B cell (primary cell): ENCODE measurements at regions of chr10 and their contacts with region 1.

Region 1: GRCh38 chr10:61903221-61903927 is 1.9 kb downstream of the ARID5B start:
- DNase-seq: peak; percentile 91
- ATAC-seq: peak; percentile 55
- H3K4me3 ChIP-seq: peak overlapping the region; percentile 69 to 98 (median 80)
- H3K4me3 Mint-ChIP-seq: peak overlapping the region; percentile 98
- H3K27ac ChIP-seq: peak overlapping the region; percentile 95 to 97
- H3K27ac Mint-ChIP-seq: peak overlapping the region; percentile 99
- H3K4me1 ChIP-seq: peaks cover 40 to 47% of the 10 kb centered on the region in 2 donors
- H3K4me1 Mint-ChIP-seq: peaks cover 49% of the 10 kb centered on the region
- H3K27me3 ChIP-seq: no peaks in the 10 kb centered on the region
- H3K27me3 Mint-ChIP-seq: no peaks in the 10 kb centered on the region
- CTCF ChIP-seq: peak; percentile 38

Region 2: DNA sequence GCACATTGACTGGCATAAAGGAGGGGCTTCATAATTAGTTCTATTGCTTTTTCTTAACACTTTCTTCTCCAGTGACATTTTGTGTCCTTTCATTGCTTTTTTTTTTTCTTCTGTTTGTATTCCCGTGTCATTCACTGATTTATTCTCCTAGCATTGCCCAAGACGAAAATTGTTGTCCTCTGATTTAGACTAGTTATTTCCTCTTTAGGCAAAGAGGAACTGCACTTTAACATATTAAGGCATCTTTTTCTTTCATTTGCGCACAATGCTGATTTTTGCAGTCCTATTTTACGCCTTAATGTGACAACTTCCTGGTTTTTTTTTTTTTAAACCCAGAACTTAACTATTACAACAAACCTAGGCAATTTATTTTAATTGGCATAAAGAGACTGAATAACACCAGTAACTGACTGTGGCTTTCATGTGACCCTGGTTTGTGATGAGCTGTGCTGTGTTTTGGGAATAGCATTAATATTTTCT is 37.9 kb after region 1 on chr10:
- CTCF ChIA-PET with region 1: interaction called, 7 read pairs
- POLR2A ChIA-PET with region 1: interaction called, 4 read pairs
- intact Hi-C with region 1: loop called (anchors 1 kb)
- DNase-seq: peak; percentile 86
- ATAC-seq: peak; percentile 64
- H3K4me3 ChIP-seq: peak overlapping the region in 2 of 5 experiments; percentile 10 to 30
- H3K4me3 Mint-ChIP-seq: peak overlapping the region; percentile 63
- H3K27ac ChIP-seq: peak overlapping the region; percentile 86 to 91
- H3K27ac Mint-ChIP-seq: peak overlapping the region; percentile 83
- H3K4me1 ChIP-seq: peaks cover 80 to 84% of the 10 kb centered on the region in 2 donors
- H3K4me1 Mint-ChIP-seq: peaks cover 77% of the 10 kb centered on the region
- H3K27me3 ChIP-seq: no peaks in the 10 kb centered on the region
- H3K27me3 Mint-ChIP-seq: no peaks in the 10 kb centered on the region
- CTCF ChIP-seq: no peak

Region 3: DNA sequence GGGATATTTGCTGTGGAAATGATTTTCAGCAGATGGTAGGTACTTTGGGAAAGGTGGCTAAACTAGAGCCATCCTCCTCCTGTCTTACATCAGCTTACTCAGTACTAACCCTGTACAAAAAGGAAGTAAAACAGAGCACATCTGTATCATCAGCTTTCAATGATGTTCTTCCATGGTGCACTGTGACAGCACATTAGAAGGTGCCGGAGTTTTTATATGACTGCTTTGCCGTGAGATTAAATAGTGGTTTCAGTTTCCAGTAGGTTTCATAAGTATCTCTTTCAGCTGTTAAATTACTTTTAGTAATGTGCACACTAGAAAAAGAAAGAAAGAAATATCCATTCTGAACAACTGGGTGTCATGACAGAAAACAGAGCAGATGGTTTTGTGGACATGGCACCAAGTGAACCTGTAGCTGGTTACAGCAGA is 84.6 kb after region 1 on chr10:
- CTCF ChIA-PET with region 1: interaction called, 12 read pairs
- POLR2A ChIA-PET with region 1: interaction called, 19 read pairs
- intact Hi-C with region 1: loop called (anchors 2 kb)
- DNase-seq: peak; percentile 88
- ATAC-seq: peak; percentile 82
- H3K4me3 ChIP-seq: peak overlapping the region in 1 of 5 experiments; percentile 29
- H3K4me3 Mint-ChIP-seq: peak overlapping the region; percentile 88
- H3K27ac ChIP-seq: peak overlapping the region; percentile 84 to 88
- H3K27ac Mint-ChIP-seq: peak overlapping the region; percentile 99
- H3K4me1 ChIP-seq: peaks cover 47 to 61% of the 10 kb centered on the region in 2 donors
- H3K4me1 Mint-ChIP-seq: peaks cover 82% of the 10 kb centered on the region
- H3K27me3 ChIP-seq: no peaks in the 10 kb centered on the region
- H3K27me3 Mint-ChIP-seq: no peaks in the 10 kb centered on the region
- CTCF ChIP-seq: no peak

Region 4: GRCh38 chr10:62000037-62000603 is 96.7 kb after region 1 on chr10:
- CTCF ChIA-PET with region 1: interaction called, 5 read pairs
- POLR2A ChIA-PET with region 1: interaction called, 15 read pairs
- intact Hi-C with region 1: loop called (anchors 1 kb)
- DNase-seq: peak; percentile 96
- ATAC-seq: peak; percentile 84
- H3K4me3 ChIP-seq: peak overlapping the region in 4 of 5 experiments; percentile 32 to 57 (median 44)
- H3K4me3 Mint-ChIP-seq: peak overlapping the region; percentile 85
- H3K27ac ChIP-seq: peak overlapping the region; percentile 96 to 98
- H3K27ac Mint-ChIP-seq: peak overlapping the region; percentile 100
- H3K4me1 ChIP-seq: peaks cover 74 to 90% of the 10 kb centered on the region in 2 donors
- H3K4me1 Mint-ChIP-seq: peaks cover 94% of the 10 kb centered on the region
- H3K27me3 ChIP-seq: no peaks in the 10 kb centered on the region
- H3K27me3 Mint-ChIP-seq: no peaks in the 10 kb centered on the region
- CTCF ChIP-seq: no peak

Region 5: DNA sequence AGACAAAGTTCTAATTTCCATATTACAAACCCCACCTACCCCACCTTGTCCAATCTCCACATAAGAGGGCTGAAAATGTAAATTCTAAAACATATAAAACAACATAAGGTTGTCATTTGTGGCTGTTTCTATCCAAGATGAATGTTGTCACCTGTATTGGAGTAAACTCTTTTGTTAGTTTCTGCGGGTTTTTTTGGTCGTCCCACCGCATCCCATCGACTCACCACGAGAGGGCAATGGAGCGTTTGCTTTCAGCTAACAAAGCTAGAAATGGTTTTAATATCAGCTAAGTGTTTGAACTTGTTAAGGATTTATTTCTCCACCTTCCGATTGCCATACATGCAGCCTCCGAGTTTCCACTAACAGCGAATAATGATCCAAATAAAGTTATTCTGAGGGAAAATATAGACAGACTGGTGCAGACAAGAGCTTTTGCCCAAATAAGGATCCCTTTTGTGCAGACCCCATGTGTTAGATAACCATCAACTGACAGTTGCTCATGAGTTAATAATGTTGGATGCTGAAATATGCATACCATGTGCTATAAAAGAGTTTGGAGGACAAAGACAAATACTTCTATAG is 135.3 kb after region 1 on chr10:
- CTCF ChIA-PET with region 1: interaction called, 110 read pairs
- POLR2A ChIA-PET with region 1: interaction called, 19 read pairs
- intact Hi-C with region 1: no loop called
- DNase-seq: peak; percentile 85
- ATAC-seq: peak; percentile 63
- H3K4me3 ChIP-seq: peak overlapping the region in 3 of 5 experiments; percentile 19 to 50 (median 27)
- H3K4me3 Mint-ChIP-seq: peak overlapping the region; percentile 74
- H3K27ac ChIP-seq: peak overlapping the region; percentile 59 to 84
- H3K27ac Mint-ChIP-seq: peak overlapping the region; percentile 87
- H3K4me1 ChIP-seq: peaks cover 74 to 81% of the 10 kb centered on the region in 2 donors
- H3K4me1 Mint-ChIP-seq: peaks cover 83% of the 10 kb centered on the region
- H3K27me3 ChIP-seq: no peaks in the 10 kb centered on the region
- H3K27me3 Mint-ChIP-seq: no peaks in the 10 kb centered on the region
- CTCF ChIP-seq: peak; percentile 89